ENCODE measurements at regions of chr2 and their contacts with region 1.

Region 1: GRCh38 chr2:150410809-150411208 is 76.7 kb downstream of the RND3 start:
- DNase-seq: peak; percentile 85
- H3K4me3 ChIP-seq: no peak overlapping the region
- H3K27ac ChIP-seq: peak overlapping the region; percentile 95
- H3K4me1 ChIP-seq: peaks cover 40% of the 10 kb centered on the region
- H3K27me3 ChIP-seq: no peaks in the 10 kb centered on the region
- CTCF ChIP-seq: no peak
- POLR2A ChIP-seq: peak; percentile 39

Region 2: DNA sequence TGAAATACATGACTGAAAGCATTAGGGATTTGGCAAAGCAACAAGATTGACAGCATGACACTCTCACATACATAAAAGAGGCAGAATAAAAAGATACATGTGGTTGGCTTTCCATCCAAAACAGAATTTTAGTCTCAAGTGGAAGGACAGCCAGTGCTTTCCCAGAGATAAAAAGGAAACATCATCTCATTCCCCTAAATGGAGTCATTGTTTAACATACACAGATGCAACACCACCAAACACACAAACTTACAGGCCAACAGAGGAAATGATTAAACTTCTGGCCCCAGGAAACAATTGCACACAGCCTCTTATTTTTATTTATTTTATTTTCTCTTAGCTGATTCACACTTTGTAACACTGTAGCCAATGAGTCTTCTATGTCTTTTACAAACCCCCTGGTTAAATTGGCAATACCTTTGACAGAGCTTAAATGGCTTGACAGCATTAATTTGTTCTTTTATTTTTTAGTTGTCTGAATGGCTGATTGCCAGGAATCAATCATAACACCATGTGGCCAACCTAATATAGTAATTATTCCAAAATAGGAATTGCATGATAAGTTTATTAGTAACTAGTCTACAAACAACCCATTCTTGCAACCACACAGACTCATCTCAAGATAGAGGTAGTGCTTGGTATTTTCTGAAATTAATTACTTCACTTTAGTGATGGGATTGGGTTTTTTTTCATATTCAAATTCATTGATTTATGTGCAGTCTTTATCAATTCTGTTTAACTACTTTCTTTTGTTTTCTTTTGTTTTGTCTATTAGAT is 113.9 kb before region 1 on chr2:
- CTCF ChIA-PET with region 1: no interaction called
- POLR2A ChIA-PET with region 1: no interaction called
- dilution Hi-C with region 1: no loop called
- intact Hi-C with region 1: loop called (anchors 2 kb)
- DNase-seq: peak; percentile 92
- H3K4me3 ChIP-seq: no peak overlapping the region
- H3K27ac ChIP-seq: peak overlapping the region; percentile 81
- H3K4me1 ChIP-seq: peaks cover 17% of the 10 kb centered on the region
- H3K27me3 ChIP-seq: no peaks in the 10 kb centered on the region
- CTCF ChIP-seq: no peak
- POLR2A ChIP-seq: no peak

Region 3: DNA sequence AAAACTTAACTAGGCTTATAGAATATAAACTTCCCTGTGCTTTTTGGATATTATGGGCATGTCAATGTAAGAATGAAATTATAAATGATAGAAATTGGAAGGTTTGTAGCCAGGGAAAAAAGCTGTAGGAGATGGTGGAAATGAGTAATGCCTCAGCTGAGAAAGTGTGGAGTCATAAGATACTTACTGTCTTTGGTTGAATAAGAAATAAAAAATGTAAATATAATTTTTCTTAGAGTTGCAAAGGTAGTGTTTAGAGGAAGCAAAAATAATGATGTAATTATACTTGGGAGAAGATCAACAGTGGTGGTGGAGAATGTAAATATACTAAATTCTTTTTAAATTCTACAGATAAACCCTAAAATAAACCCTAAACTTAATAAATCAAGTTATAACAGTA is 102.8 kb after region 1 on chr2:
- CTCF ChIA-PET with region 1: no interaction called
- POLR2A ChIA-PET with region 1: no interaction called
- dilution Hi-C with region 1: no loop called
- intact Hi-C with region 1: no loop called
- DNase-seq: no peak
- H3K4me3 ChIP-seq: no peak overlapping the region
- H3K27ac ChIP-seq: no peak overlapping the region
- H3K4me1 ChIP-seq: no peaks in the 10 kb centered on the region
- H3K27me3 ChIP-seq: no peaks in the 10 kb centered on the region
- CTCF ChIP-seq: no peak
- POLR2A ChIP-seq: no peak

Measured in endothelial cell of umbilical vein (primary cell).